GM10248 (cell line): ENCODE measurements at regions of chr19 and their contacts with region 1.

Region 1: GRCh38 chr19:54674021-54674617 is 11.3 kb downstream of the LILRB4 start:
- DNase-seq: peak; percentile 44
- CTCF ChIP-seq: peak; percentile 78

Region 2: DNA sequence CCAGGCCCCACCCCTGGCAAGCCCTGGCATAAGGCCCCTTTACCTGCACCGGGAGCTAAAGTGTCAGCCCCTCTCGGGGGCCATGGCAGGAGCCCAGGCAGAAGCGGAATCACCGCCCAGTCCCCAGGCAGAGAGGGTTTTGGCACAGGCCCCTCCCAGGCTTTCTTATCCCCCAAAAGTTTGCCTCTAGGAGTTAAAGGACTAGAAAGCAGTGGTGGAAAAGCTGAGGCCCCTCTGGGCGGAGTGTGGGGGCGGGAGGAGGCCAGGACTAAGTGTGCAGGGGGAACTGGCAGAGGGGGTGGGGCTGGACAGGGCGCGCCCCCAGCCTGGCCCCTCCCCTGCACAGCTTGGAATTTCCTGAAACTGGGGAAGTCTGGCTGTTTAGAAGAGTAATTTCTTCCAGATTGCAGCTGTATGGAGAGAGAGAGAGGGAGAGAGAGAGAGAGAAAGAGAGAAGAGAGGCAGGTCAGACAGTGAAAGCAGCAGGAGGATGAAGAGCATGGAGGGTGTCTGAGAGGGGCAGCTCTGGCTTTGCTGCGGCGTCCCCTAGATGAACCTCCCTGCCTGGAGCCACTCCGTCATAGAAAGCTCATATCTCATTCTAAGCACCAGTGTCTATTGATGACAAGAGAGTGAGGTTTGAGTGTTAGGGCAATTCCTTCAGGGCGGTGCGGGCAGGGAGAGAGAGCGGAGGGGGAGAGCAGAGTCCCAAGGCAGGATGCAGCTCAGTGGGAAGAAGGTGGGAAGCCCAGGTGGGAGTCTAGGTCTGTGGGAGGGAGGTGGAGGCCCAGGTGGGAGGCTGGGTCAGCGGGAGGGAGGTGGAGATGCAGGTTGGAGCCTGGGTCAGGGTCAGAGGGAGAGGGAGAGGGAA is 200.9 kb before region 1 on chr19 and contains the start of gene CDC42EP5:
- CTCF ChIA-PET with region 1: interaction called, 129 read pairs
- POLR2A ChIA-PET with region 1: no interaction called
- DNase-seq: no peak
- CTCF ChIP-seq: no peak

Region 3: GRCh38 chr19:54481322-54481930 is 192.7 kb before region 1 on chr19:
- CTCF ChIA-PET with region 1: interaction called, 129 read pairs
- POLR2A ChIA-PET with region 1: no interaction called
- DNase-seq: peak; percentile 61
- CTCF ChIP-seq: peak; percentile 58

Region 4: DNA sequence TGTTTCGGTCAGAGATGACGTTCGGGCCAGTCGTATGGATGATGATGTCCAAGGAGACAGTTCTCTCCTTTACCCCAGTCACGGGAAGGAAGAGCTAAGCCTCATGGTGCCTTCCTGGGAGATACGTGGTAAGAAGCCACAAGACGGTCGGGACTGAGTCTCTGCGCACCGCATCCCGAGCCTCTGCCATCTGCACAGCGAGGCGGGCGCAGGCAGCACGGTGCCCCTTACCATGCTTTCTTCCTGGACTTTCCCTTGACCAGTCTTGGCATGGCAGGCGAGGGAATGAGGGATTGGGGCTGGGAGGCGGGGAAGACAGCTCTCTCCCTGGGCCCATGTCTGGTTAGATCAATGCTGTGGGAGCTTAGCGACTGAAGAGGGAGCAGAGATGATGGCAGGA is 181.6 kb before region 1 on chr19:
- CTCF ChIA-PET with region 1: interaction called, 12 read pairs
- POLR2A ChIA-PET with region 1: interaction called, 3 read pairs
- DNase-seq: no peak
- CTCF ChIP-seq: no peak

Region 5: DNA sequence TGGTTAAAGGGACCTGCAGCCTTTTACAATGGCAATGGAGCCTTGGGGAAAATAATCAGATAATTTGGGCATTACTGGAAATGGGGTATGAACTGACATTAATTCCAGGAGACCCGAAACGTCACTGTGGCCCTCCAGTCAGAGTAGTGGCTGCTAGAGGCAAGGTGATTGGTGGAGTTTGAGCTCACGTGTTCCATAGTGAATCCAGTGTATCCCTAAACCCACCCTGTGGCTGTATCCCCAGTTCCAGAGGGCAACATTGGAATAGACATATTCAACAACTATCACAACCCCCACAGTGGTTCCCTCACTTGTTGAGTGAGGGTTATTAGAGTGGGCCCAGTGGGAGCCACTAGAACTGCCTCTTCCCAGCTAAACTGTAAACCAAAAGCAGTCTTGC is 103.8 kb before region 1 on chr19:
- CTCF ChIA-PET with region 1: interaction called, 11 read pairs
- POLR2A ChIA-PET with region 1: no interaction called
- DNase-seq: no peak
- CTCF ChIP-seq: no peak

Region 6: GRCh38 chr19:54803410-54803809 is 129.3 kb after region 1 on chr19 and contains the start of gene KIR2DL4:
- CTCF ChIA-PET with region 1: no interaction called
- POLR2A ChIA-PET with region 1: no interaction called
- DNase-seq: no peak
- CTCF ChIP-seq: no peak